ENCODE measurements at regions of chr11 and their contacts with region 1.

Region 1: GRCh38 chr11:11157185-11157584 is 195.9 kb downstream of the CSNK2A3 start:
- DNase-seq: peak; percentile 35 to 59 (median 55)
- H3K4me3 ChIP-seq: no peak overlapping the region
- H3K27ac ChIP-seq: no peak overlapping the region
- H3K4me1 ChIP-seq: peaks cover 0 to 7% (median 4%) of the 10 kb centered on the region in 4 experiments
- H3K27me3 ChIP-seq: peaks cover 0 to 3% (median 0%) of the 10 kb centered on the region in 5 experiments

Region 2: GRCh38 chr11:11036848-11037732 is 120.1 kb before region 1 on chr11:
- CTCF ChIA-PET with region 1: interaction called, 36 read pairs
- POLR2A ChIA-PET with region 1: no interaction called
- DNase-seq: peak; percentile 72 to 80 (median 78)
- H3K4me3 ChIP-seq: no peak overlapping the region
- H3K27ac ChIP-seq: no peak overlapping the region
- H3K4me1 ChIP-seq: peaks cover 0 to 7% (median 3%) of the 10 kb centered on the region in 4 experiments
- H3K27me3 ChIP-seq: peaks cover 0 to 3% (median 0%) of the 10 kb centered on the region in 5 experiments

Region 3: GRCh38 chr11:11137339-11137738 is 19.8 kb before region 1 on chr11:
- CTCF ChIA-PET with region 1: interaction called, 24 read pairs
- POLR2A ChIA-PET with region 1: no interaction called
- DNase-seq: peak in 2 of 3 donors; percentile 29 to 30
- H3K4me3 ChIP-seq: no peak overlapping the region
- H3K27ac ChIP-seq: no peak overlapping the region
- H3K4me1 ChIP-seq: peaks cover 0 to 5% (median 5%) of the 10 kb centered on the region in 4 experiments
- H3K27me3 ChIP-seq: no peaks in the 10 kb centered on the region

Region 4: DNA sequence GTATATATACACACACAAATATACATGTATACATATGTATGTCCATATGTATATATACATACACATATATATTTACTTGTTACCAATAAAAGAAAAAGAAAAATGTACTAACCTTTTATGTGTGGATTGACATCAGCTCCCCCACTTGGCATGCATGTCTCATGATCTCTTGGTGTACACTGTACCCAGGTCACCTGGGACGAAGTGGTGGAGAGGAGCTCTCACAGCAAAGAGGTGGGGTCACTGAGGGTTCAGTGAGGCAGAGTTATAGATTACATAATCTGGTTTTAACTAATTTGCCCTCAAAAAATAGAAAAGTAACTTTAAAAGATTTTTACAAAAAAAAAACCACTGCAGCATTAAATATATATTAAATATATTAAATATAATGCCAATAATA is 669.1 kb after region 1 on chr11:
- CTCF ChIA-PET with region 1: no interaction called
- POLR2A ChIA-PET with region 1: no interaction called
- DNase-seq: no peak
- H3K4me3 ChIP-seq: no peak overlapping the region
- H3K27ac ChIP-seq: no peak overlapping the region
- H3K4me1 ChIP-seq: no peaks in the 10 kb centered on the region
- H3K27me3 ChIP-seq: no peaks in the 10 kb centered on the region